RWPE1 (cell line): ENCODE measurements at regions of chr22 and their contacts with region 1.

Region 1: DNA sequence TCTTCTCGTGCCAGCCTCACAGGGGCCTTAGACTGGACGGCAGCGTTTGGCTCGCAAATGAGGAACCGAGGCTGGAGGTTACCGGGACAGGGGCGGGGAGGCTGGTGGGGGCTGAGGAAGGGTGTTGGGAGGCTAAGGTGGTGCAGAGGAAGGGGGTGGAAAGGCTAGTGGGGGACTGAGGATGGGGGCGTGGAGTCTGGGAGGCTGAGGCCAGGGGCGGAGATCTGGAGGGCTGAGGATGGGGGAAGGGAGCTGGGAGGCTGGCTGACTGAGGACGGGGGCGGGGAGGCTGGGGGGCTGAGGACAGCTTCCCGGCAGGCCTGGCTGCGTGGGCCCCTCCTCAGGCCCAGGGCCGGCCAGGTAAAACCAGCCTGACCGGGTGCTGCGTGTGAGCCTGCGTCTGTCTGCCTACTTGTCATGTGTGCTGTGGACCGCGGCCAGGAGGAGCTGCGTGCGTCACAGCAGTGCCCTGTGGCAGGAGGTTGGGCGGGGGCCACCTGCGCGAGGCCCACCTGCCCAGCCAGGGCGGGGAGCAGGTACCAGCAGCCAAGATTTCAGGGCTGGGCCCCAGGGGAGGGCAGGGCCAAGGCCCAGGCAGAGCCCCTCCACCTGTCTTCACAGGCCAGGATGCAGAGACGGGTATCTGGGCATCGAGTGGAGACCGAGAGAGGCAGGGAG is 9.4 kb upstream of the PIM3 start:
- DNase-seq: peak; percentile 54
- H3K27ac ChIP-seq: peak overlapping the region; percentile 92
- CTCF ChIP-seq: no peak

Region 2: GRCh38 chr22:49789289-49790141 is 161.6 kb before region 1 on chr22:
- CTCF ChIA-PET with region 1: no interaction called
- POLR2A ChIA-PET with region 1: no interaction called
- DNase-seq: peak; percentile 14
- H3K27ac ChIP-seq: peak overlapping the region; percentile 70
- CTCF ChIP-seq: no peak

Region 3: GRCh38 chr22:49936018-49936952 is 14.9 kb before region 1 on chr22:
- CTCF ChIA-PET with region 1: no interaction called
- POLR2A ChIA-PET with region 1: interaction called, 10 read pairs
- DNase-seq: peak; percentile 38
- H3K27ac ChIP-seq: peak overlapping the region; percentile 83
- CTCF ChIP-seq: no peak

Region 4: GRCh38 chr22:49979587-49980264 is 28.6 kb after region 1 on chr22:
- CTCF ChIA-PET with region 1: no interaction called
- POLR2A ChIA-PET with region 1: no interaction called
- DNase-seq: no peak
- H3K27ac ChIP-seq: no peak overlapping the region
- CTCF ChIP-seq: peak; percentile 51